PC-3 (cell line): ENCODE measurements at regions of chr18 and their contacts with region 1.

Region 1: DNA sequence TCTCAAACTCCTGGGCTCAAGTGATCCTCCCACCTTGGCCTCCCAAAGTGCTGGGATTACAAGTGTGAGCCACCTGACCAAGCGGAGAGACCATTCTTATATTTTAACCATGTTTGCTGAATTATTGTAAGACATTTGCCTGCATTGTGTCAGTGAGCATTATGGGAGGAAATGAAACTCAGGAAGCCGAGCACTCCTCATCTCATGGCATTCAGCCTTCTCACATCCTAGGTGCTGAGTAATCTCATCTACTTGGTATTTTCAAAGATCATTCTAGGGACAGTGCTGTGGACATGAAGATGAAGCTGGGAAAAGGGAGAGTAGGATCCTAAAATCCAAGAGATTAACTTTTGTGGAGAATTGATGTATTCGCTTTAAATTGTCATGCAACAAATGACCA is 66.1 kb downstream of the NAPG start:
- DNase-seq: no peak
- ATAC-seq: no peak
- H3K4me3 ChIP-seq: no peak overlapping the region
- H3K27ac ChIP-seq: no peak overlapping the region
- H3K4me1 ChIP-seq: no peaks in the 10 kb centered on the region
- H3K27me3 ChIP-seq: no peaks in the 10 kb centered on the region
- CTCF ChIP-seq: no peak

Region 2: DNA sequence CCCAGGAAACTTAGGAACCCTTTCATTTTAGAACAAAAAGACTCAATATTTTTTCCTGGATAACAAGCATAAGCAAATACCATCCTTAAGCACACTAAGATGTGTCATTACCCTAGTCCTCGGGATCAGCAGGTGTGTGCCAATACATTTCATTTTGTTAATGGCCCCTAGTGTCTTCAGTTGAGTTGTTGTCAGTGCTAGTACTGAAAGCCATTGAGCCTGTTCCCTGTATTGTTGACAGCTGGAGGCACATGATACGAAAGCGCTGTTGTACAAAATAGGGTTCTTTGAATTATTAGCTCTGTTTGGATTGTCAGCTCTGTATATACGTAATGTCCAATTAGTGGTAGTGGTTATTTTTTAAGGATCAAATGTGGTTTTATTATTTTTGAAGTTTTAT is 648.6 kb before region 1 on chr18:
- CTCF ChIA-PET with region 1: no interaction called
- POLR2A ChIA-PET with region 1: interaction called, 10 read pairs
- intact Hi-C with region 1: no loop called
- DNase-seq: no peak
- ATAC-seq: no peak
- H3K4me3 ChIP-seq: no peak overlapping the region
- H3K27ac ChIP-seq: no peak overlapping the region
- H3K4me1 ChIP-seq: no peaks in the 10 kb centered on the region; the same call in 1 of the 2 replicates
- H3K27me3 ChIP-seq: no peaks in the 10 kb centered on the region
- CTCF ChIP-seq: no peak

Region 3: DNA sequence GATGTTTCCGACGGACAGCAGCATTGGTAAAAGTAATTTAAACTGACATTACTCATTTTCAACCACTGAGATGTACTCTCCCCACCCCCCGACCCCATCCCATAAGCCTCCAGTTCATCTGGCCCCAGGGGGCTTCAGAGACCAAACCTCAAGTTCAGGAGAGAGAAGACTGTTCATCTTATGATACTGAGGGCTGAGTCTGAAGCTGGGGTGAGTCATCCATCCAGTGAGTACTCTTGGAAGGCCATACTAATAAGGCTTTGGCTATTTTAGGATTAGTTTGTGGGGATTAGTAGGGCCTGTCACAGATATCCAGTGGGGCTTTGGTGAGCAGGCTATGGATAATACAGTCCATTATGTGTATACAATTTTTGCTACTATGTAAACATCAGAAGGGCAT is 262.8 kb before region 1 on chr18:
- CTCF ChIA-PET with region 1: no interaction called
- POLR2A ChIA-PET with region 1: no interaction called
- intact Hi-C with region 1: no loop called
- DNase-seq: no peak
- ATAC-seq: no peak
- H3K4me3 ChIP-seq: no peak overlapping the region
- H3K27ac ChIP-seq: no peak overlapping the region
- H3K4me1 ChIP-seq: no peaks in the 10 kb centered on the region
- H3K27me3 ChIP-seq: peaks cover 75% of the 10 kb centered on the region
- CTCF ChIP-seq: no peak

Region 4: GRCh38 chr18:10546557-10547300 is 45.2 kb before region 1 on chr18:
- CTCF ChIA-PET with region 1: no interaction called
- POLR2A ChIA-PET with region 1: no interaction called
- intact Hi-C with region 1: no loop called
- DNase-seq: no peak
- ATAC-seq: no peak
- H3K4me3 ChIP-seq: no peak overlapping the region
- H3K27ac ChIP-seq: no peak overlapping the region
- H3K4me1 ChIP-seq: no peaks in the 10 kb centered on the region
- H3K27me3 ChIP-seq: no peaks in the 10 kb centered on the region
- CTCF ChIP-seq: no peak

Region 5: DNA sequence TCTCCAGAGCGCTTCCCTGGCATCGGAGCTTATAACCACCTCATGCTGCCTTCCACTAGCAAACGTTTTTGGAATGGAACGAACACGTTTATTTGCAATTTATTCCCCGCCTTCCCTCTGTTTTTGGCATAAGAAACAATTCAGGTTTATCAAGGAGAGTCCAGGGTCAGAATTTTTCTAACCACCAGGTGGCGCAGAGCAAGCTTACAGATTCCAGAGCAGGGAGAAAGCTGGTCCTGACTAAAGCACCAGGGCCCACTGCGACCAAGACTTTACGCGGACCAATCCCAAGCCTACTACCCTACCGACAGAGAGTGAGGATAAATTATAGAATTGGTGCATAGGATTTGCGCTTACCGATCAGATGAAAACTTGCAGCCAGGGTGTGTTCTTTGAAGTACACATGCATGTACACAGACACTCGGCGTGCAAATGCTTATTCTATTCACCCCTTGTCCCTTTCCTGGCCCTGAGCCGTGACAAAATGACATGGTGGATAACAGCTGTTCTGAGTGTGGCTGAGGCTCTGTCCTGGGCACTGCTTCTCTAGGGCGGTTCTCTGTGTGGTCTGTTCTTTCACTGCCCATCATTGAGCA is 31.3 kb before region 1 on chr18:
- CTCF ChIA-PET with region 1: no interaction called
- POLR2A ChIA-PET with region 1: no interaction called
- intact Hi-C with region 1: loop called (anchors 5 kb)
- DNase-seq: peak; percentile 83
- ATAC-seq: peak; percentile 76
- H3K4me3 ChIP-seq: no peak overlapping the region; the same call in 1 of the 2 replicates
- H3K27ac ChIP-seq: no peak overlapping the region
- H3K4me1 ChIP-seq: peaks cover 11% of the 10 kb centered on the region
- H3K27me3 ChIP-seq: no peaks in the 10 kb centered on the region
- CTCF ChIP-seq: peak; percentile 84

Region 6: GRCh38 chr18:10660179-10660884 is 68.4 kb after region 1 on chr18:
- CTCF ChIA-PET with region 1: no interaction called
- POLR2A ChIA-PET with region 1: no interaction called
- intact Hi-C with region 1: no loop called
- DNase-seq: no peak
- ATAC-seq: no peak
- H3K4me3 ChIP-seq: no peak overlapping the region
- H3K27ac ChIP-seq: no peak overlapping the region
- H3K4me1 ChIP-seq: no peaks in the 10 kb centered on the region
- H3K27me3 ChIP-seq: peaks cover 69% of the 10 kb centered on the region
- CTCF ChIP-seq: no peak

Region 7: DNA sequence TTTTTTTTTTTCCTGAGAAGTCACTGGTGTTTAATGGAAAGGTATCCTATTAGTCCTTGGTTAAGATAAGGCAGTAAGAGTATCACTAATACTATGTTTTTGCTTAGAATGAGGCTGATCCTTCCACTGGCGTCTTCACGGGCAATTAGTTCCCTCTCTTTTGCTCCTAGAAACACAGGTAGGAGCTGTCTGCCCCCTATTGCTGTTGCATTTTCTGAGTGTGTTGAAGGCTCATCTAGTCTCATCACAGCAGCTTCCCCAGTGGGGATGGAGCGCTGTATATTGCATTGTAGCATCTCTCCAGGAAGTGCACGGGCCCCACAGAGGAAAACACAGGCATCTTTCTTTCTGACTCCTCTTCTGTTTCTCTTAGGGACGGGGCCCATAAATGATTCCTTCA is 79.0 kb after region 1 on chr18:
- CTCF ChIA-PET with region 1: no interaction called
- POLR2A ChIA-PET with region 1: no interaction called
- intact Hi-C with region 1: no loop called
- DNase-seq: no peak
- ATAC-seq: no peak
- H3K4me3 ChIP-seq: no peak overlapping the region
- H3K27ac ChIP-seq: no peak overlapping the region
- H3K4me1 ChIP-seq: no peaks in the 10 kb centered on the region
- H3K27me3 ChIP-seq: peaks cover 87% of the 10 kb centered on the region
- CTCF ChIP-seq: no peak

Region 8: DNA sequence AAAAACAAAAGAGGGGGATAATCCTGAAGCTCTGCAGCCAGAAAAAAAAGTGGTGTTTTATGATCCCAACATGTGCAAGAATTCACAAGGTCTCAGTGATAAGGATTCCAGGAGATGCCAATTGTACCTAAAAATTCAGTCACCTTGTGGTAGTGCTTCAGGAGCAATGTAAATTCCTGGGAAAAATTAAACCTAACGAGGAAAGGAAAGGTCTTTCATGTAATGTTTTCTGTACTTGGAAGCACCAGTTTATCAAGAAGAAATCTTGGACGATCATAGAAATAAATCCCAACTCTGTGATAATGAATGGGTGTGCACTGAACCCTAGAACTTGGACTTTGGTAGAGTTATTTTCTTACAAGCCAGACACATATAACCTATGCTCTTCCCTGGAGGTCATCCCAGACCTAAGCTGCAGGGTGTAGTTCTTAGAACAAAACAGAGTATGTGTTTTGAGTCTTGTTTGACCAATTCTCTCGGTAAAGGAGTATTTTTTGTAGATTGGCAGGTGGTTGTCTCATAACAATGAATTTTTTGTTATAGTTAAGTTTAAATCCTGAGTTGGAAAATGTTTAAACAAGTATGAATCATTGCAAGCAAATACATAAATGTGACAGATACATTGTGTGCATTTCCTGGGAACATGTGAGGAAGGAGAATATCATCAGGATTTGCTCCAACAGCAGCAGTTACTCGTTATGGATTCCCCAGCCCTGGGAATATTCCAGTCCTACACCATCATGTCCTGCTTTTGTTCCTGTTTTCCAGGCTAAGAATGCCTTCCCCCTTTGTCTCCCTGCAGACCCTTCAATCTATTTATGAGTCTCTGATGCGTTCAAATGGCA is 158.5 kb after region 1 on chr18:
- CTCF ChIA-PET with region 1: no interaction called
- POLR2A ChIA-PET with region 1: no interaction called
- intact Hi-C with region 1: loop called (anchors 10 kb)
- DNase-seq: peak; percentile 78
- ATAC-seq: peak; percentile 83
- H3K4me3 ChIP-seq: no peak overlapping the region
- H3K27ac ChIP-seq: peak overlapping the region; percentile 82
- H3K4me1 ChIP-seq: peaks cover 37% of the 10 kb centered on the region
- H3K27me3 ChIP-seq: peaks cover 22% of the 10 kb centered on the region
- CTCF ChIP-seq: no peak